ENCODE measurements at regions of chr5 and their contacts with region 1.

Region 1: DNA sequence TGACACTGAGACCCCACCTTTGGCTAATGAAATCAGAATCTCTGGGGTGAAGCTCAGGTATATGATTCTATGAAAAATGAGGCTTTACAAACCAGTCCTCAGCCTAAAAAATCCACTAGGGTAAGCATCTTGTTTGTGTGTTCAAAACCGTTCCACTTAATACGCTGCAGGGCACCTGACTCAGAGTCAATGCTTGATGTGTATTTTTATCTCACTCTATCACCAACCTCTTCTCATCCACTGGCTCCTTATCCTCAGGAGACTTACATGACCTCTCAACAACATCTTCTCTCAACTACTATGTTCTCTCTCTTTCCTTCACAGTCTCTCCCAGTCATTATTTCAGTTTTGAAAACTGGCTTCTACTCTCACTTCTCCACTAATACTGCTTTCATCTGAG is 153.3 kb upstream of the KCNN2 start:
- DNase-seq: no peak
- ATAC-seq: no peak
- H3K4me3 ChIP-seq: no peak overlapping the region
- H3K27ac ChIP-seq: no peak overlapping the region
- H3K4me1 ChIP-seq: no peaks in the 10 kb centered on the region
- H3K27me3 ChIP-seq: no peaks in the 10 kb centered on the region
- CTCF ChIP-seq: no peak
- EP300 ChIP-seq: no peak
- POLR2A ChIP-seq: no peak
- RAD21 ChIP-seq: no peak

Region 2: GRCh38 chr5:114223866-114224265 is 15.3 kb after region 1 on chr5:
- CTCF ChIA-PET with region 1: interaction called, 7 read pairs
- POLR2A ChIA-PET with region 1: no interaction called
- RAD21 ChIA-PET with region 1: no interaction called
- SMC1A ChIA-PET with region 1: interaction called, 11 read pairs
- in situ Hi-C with region 1: no loop called
- intact Hi-C with region 1: no loop called
- DNase-seq: no peak
- ATAC-seq: peak; percentile 70
- H3K4me3 ChIP-seq: no peak overlapping the region
- H3K27ac ChIP-seq: no peak overlapping the region
- H3K4me1 ChIP-seq: no peaks in the 10 kb centered on the region
- H3K27me3 ChIP-seq: no peaks in the 10 kb centered on the region
- CTCF ChIP-seq: peak; percentile 21 to 36 (median 35); a peak in 2 of 6 replicates
- EP300 ChIP-seq: no peak
- POLR2A ChIP-seq: no peak
- RAD21 ChIP-seq: peak; percentile 24; the same call in 1 of the 2 replicates